ENCODE measurements at regions of chr7 and their contacts with region 1.

Region 1: DNA sequence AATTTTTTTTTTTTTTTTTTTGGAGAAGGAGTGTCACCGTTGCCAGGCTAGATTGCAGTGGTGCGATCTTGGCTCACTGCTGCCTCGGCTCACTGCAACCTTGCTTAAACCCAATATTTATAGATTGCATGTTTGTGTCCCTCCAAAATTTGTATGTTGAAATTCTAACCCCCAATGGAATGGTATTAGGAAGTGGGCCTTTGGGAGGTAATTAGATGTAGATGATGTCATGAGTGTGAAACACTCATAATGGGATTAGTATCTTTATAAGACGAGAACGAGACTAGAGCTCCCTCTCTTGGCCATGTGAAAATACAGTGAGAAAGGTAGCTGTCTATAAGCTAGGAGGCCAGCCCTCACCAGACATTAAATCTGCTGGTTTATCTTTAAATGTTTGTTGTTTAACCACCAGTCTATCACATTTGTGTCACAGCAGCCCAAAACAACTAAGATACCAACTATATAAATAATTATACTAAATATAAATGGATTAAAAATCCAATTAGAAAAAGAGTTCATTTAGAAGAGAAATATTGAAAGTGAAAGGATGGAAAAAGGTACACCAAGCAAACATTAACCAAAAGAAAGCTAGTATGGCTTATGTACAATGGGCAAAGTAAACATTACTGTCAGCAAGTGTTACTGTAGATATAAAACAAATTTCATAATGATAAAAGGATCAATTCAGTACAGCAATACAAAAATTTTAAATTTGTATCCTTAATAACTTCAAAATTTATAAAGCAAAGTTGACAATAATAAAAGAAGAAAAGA is 9.3 kb downstream of the TCAF1 start:
- DNase-seq: peak; percentile 74
- ATAC-seq: peak; percentile 98
- H3K4me3 ChIP-seq: no peak overlapping the region
- H3K27ac ChIP-seq: no peak overlapping the region
- H3K4me1 ChIP-seq: no peaks in the 10 kb centered on the region
- H3K27me3 ChIP-seq: no peaks in the 10 kb centered on the region
- CTCF ChIP-seq: peak; percentile 76

Region 2: DNA sequence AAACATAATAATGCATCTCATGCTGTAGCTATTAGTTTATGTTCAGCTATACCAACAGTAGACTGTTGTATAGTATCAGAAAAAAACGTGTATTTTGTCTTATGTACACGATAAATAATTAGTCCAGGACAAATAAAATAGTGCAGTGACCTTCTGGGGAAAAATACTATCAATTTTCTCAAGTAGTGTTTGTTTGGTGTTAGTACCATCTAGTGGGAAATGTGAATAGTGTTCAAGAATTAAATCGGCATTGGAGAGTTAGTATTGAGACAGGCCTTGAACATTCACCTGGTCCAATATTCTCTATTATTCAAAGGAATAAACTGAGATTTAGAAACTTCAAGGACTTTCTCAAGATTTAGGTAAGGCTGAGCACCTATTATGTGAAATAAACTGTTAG is 134.4 kb after region 1 on chr7:
- CTCF ChIA-PET with region 1: no interaction called
- POLR2A ChIA-PET with region 1: no interaction called
- intact Hi-C with region 1: loop called (anchors 2 kb)
- DNase-seq: peak; percentile 52
- ATAC-seq: peak; percentile 68
- H3K4me3 ChIP-seq: no peak overlapping the region
- H3K27ac ChIP-seq: no peak overlapping the region
- H3K4me1 ChIP-seq: peaks cover 7% of the 10 kb centered on the region; the same call in 1 of the 2 replicates
- H3K27me3 ChIP-seq: no peaks in the 10 kb centered on the region
- CTCF ChIP-seq: peak; percentile 66

Measured in PC-3 (cell line).